Tibial artery (tissue), 4 donors: ENCODE measurements at regions of chr1 and their contacts with region 1.

Region 1: GRCh38 chr1:8202182-8202905 is 115.6 kb upstream of the SLC45A1 start:
- DNase-seq: peak; percentile 83 to 95
- H3K4me3 ChIP-seq: peak overlapping the region in 1 of 2 donors; percentile 35
- H3K27ac ChIP-seq: peak overlapping the region; percentile 96
- H3K4me1 ChIP-seq: peaks cover 0 to 69% (median 61%) of the 10 kb centered on the region in 4 donors
- H3K27me3 ChIP-seq: no peaks in the 10 kb centered on the region
- CTCF ChIP-seq: no peak

Region 2: DNA sequence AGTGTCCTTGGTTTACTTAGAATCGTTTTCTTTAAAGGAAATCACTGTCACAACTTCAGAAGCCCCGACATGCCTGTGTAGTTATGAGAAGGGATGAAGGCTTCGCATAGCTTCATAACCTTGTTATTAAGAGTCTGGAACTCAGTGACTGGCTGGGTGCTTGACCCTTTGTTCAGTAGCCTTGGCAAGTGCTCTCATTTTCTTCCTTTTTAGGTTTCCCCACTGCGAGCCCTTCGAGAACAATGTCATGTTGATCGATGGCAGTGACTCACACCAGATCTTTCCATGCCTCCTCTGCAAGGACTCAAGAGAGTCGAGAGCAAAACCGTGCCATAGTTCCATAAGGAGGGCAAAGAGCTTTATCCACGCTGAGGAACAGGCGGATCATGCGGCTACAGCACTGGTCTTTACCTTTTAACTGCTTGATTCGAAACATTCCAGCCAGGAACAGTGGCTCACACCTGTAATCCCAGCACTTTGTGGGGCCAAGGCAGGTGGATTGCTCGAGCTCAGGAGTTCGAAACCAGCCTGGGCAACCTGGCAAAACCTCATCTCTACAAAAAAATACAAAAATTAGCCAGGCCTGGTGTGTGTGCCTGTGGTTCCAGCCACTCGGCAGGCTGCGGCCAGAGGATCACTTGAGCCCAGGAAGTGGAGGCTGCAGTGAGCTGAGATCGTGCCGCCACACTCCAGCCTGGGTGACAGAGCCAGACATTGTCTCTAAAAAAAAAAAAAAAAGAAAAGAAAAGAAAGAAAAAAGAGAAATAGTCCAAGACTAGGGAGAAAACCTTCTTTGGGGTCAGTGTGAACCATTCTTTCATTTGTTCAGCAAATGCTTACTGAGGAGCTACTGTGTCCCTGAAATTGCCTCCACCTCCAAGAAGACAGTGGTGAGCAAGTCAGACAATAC is 80.8 kb before region 1 on chr1:
- intact Hi-C with region 1: loop called (anchors 5 kb)
- DNase-seq: peak; percentile 87 to 91
- H3K4me3 ChIP-seq: peak overlapping the region; percentile 20 to 30
- H3K27ac ChIP-seq: peak overlapping the region; percentile 90 to 91
- H3K4me1 ChIP-seq: peaks cover 0 to 83% (median 64%) of the 10 kb centered on the region in 4 donors
- H3K27me3 ChIP-seq: no peaks in the 10 kb centered on the region
- CTCF ChIP-seq: no peak